Calu3 (cell line): ENCODE measurements at regions of chr12 and their contacts with region 1.

Region 1: DNA sequence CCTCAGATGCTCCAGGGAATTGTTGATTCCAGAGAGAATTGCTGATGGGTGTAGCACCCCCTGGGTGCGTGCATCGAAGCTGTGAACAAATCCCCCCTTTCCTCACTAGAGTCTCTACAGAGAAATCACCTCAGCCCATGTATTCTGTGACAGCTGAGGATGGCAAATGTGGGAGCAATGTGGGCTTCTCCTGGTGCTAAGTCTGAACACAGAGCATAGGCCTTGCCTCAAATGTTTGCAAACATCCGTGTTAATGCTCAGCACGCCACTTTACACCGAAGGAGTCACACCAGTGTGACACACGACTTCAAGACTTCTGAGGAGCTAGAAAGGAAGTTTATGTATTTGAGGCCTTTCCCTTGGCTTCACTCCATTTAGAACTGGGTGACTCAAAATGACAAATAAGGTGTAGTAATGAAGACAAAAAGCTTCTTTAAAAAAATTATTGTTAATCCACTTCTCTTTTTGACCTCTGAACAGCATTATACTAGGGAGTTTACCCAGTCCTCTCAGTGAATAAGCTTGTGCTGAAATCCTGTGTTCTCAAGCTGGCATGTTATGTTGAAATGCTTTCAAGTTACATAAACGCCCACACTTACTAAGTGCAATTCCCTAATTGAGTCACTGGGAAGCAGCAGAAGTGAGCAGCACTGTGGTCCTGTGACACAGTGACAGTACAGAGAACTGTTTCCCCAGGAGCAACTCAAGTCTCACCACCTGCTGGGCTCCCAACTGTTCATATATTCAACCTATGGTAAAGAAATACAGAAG is 92.9 kb downstream of the FAR2 start:
- DNase-seq: peak; percentile 52
- H3K4me3 Mint-ChIP-seq: peak overlapping the region; percentile 36
- H3K27ac Mint-ChIP-seq: peak overlapping the region; percentile 88
- H3K4me1 Mint-ChIP-seq: peaks cover 69% of the 10 kb centered on the region
- H3K27me3 Mint-ChIP-seq: no peaks in the 10 kb centered on the region
- CTCF ChIP-seq: no peak

Region 2: GRCh38 chr12:27261866-27262265 is 1980.1 kb before region 1 on chr12:
- CTCF ChIA-PET with region 1: no interaction called
- intact Hi-C with region 1: no loop called
- DNase-seq: no peak
- H3K4me3 Mint-ChIP-seq: no peak overlapping the region
- H3K27ac Mint-ChIP-seq: no peak overlapping the region
- H3K4me1 Mint-ChIP-seq: no peaks in the 10 kb centered on the region
- H3K27me3 Mint-ChIP-seq: no peaks in the 10 kb centered on the region
- CTCF ChIP-seq: no peak

Region 3: GRCh38 chr12:29039013-29039412 is 203.0 kb before region 1 on chr12:
- CTCF ChIA-PET with region 1: no interaction called
- intact Hi-C with region 1: no loop called
- DNase-seq: no peak
- H3K4me3 Mint-ChIP-seq: no peak overlapping the region
- H3K27ac Mint-ChIP-seq: no peak overlapping the region
- H3K4me1 Mint-ChIP-seq: peaks cover 13% of the 10 kb centered on the region
- H3K27me3 Mint-ChIP-seq: no peaks in the 10 kb centered on the region
- CTCF ChIP-seq: no peak

Region 4: DNA sequence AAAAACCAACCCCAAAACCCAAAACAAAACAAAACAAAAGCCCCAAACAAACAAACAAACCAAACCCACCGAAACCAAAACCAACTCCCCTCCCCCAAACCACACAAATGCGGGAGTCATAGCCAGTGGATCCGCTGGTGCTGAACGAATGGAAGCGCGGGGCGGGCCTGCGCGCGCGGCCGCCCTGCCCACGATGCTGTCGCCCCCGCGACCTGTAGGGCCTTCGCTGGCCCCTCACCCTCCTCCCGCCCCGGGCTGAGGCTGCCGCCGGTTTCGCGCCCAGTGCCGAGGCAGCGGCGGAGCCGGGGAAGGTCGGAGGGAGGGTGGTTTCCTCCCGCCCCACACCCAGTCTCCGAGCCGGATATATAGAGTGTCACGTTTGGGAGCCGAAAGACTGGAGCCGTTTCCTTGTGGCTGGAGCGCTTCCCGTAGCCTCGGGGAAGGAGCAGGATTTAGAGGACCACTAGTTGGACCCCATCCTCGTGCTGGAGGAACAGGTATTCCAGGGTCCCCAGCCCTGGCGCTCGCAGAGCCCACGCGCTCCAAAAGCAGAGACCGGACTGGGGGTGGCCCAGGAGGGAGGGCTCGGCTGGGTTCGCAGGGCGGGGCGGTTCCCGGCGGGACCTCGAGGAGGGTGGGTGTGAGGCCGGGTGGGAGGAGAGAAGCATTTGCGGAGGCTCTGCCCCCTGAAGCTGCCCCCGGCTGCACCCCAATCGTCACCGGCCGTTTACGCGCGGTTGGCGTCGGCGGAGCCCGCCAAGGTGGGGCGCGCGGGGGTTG is 92.9 kb before region 1 on chr12 and contains the start of gene FAR2:
- CTCF ChIA-PET with region 1: interaction called, 3 read pairs
- intact Hi-C with region 1: loop called (anchors 5 kb)
- DNase-seq: peak; percentile 76
- H3K4me3 Mint-ChIP-seq: peak within 1 kb of the TSS; percentile 98
- H3K27ac Mint-ChIP-seq: peak within 1 kb of the TSS; percentile 99
- H3K4me1 Mint-ChIP-seq: peaks cover 12% of the 10 kb centered on the region
- H3K27me3 Mint-ChIP-seq: no peaks in the 10 kb centered on the region
- CTCF ChIP-seq: no peak
- total RNA-seq, gene FAR2: 20.8 and 24.0 TPM in 2 replicates

Region 5: DNA sequence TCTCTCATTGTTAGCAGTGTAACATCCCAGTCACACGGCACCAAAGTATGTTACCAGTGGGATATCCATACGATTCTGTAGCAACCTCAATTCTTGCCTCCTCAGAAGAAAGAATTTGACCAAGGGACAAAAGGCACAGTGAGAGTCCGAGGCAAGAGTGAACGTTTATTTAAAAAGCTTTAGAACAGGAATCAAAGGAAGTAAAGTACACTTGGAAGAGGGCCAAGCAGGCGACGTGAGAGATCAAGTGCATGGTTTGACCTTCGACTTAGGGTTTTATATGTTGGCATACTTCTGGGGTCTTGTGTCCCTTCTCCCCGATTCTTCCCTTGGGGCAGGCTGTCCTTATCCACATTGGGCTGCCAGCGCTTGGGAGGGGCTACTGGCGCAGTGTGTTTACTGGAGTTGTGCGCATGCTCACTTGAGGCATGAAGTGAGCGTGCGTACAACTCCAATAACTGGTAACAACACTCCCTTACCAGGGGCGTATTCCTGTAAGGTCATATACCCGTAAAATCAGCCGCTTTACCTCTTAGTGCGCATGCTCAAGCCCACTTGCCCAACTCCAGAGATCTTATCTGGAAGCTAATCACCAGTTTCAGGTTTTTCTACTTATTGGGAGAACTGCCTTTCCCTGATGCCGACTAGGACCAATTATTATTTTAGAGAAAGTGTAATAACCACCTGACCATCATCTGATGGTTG is 21.2 kb before region 1 on chr12:
- CTCF ChIA-PET with region 1: no interaction called
- intact Hi-C with region 1: loop called (anchors 1 kb)
- DNase-seq: peak; percentile 84
- H3K4me3 Mint-ChIP-seq: peak overlapping the region; percentile 78
- H3K27ac Mint-ChIP-seq: peak overlapping the region; percentile 96
- H3K4me1 Mint-ChIP-seq: peaks cover 36% of the 10 kb centered on the region
- H3K27me3 Mint-ChIP-seq: no peaks in the 10 kb centered on the region
- CTCF ChIP-seq: no peak

Region 6: GRCh38 chr12:29278673-29279420 is 36.8 kb after region 1 on chr12:
- CTCF ChIA-PET with region 1: no interaction called
- intact Hi-C with region 1: loop called (anchors 5 kb)
- DNase-seq: no peak
- H3K4me3 Mint-ChIP-seq: no peak overlapping the region
- H3K27ac Mint-ChIP-seq: no peak overlapping the region
- H3K4me1 Mint-ChIP-seq: no peaks in the 10 kb centered on the region
- H3K27me3 Mint-ChIP-seq: no peaks in the 10 kb centered on the region
- CTCF ChIP-seq: no peak

Region 7: DNA sequence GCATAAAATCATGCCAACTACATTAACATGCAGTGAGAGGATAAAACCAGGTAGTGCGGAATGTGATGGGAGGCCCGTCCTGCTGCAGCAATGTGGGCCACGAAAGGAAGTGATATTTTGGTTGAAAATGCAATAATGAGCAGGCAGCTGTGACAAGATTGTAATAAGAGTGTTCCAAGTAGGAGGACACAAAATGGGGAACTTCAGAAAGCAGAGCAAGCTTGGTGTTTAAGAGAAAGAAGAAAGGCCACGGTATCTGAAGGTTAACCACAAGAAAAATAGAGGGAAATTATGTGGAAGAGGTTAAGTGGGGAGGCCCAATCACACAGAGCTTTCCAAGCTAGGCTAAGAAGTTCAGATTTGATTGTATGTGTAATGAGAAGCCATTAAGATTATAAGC is 221.2 kb after region 1 on chr12:
- CTCF ChIA-PET with region 1: no interaction called
- intact Hi-C with region 1: no loop called
- DNase-seq: no peak
- H3K4me3 Mint-ChIP-seq: no peak overlapping the region
- H3K27ac Mint-ChIP-seq: no peak overlapping the region
- H3K4me1 Mint-ChIP-seq: no peaks in the 10 kb centered on the region
- H3K27me3 Mint-ChIP-seq: no peaks in the 10 kb centered on the region
- CTCF ChIP-seq: no peak